Aorta (tissue), 5 donors: ENCODE measurements at regions of chr11 and their contacts with region 1.

Region 1: DNA sequence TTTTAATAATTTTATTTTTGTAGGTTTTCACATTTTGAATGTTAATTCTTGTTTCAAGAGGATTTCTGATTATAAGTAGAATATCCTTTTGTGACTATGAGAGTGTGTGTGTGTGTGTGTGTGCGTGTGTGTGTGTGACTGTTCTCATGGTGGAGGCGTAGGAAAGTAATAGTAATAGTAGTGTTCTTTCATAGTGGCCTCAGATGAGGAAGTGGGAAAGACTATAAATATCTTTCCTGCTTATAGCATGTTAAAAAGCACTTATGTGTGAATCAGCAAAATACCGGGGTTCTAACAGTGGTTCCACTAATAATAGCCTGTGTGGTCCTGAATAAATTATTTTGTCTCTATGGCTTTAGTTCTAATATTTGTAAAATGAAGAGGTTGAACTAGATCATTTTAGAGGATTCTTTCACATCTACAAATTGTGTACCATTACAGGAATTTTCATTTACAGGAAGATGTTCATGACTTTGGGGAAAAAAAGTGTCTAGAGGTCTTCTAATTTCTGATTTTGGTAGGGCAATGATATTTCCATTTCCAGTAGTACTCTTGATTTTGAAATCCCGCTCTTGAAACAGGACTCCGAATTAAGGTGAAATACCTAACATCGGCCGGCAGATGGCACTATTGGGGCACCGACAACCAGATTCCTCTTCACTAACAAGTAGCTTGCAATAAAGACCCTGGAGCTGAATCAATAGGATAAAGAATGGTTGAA is 29.9 kb upstream of the OR10G7 start:
- DNase-seq: peak; percentile 66 to 88
- ATAC-seq: peak; percentile 71
- H3K4me3 ChIP-seq: no peak overlapping the region
- H3K27ac ChIP-seq: no peak overlapping the region
- H3K4me1 ChIP-seq: no peaks in the 10 kb centered on the region
- H3K27me3 ChIP-seq: no peaks in the 10 kb centered on the region

Region 2: DNA sequence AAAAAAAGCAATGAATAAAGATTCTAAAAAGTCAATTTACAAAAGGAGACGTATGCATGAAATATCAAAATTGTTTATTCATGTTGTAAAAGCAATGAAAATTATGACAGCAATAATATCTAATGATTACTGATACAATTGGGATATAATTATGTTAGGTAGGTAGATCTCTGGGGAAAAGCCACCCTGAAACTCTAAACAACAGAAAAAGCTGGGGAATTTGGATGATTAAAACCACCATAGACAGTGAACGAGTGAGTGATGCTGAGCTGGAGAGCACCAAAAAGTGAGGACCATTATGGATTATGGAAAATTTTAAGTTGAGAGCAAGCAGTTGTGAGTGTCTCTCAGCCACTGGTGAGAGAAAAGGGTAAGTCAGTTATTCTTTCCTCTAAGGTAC is 44.6 kb before region 1 on chr11 and contains the start of gene OR10G8:
- intact Hi-C with region 1: no loop called
- DNase-seq: no peak
- ATAC-seq: no peak
- H3K4me3 ChIP-seq: no peak within 1 kb of the TSS
- H3K27ac ChIP-seq: no peak within 1 kb of the TSS
- H3K4me1 ChIP-seq: no peaks in the 10 kb centered on the region
- H3K27me3 ChIP-seq: no peaks in the 10 kb centered on the region
- total RNA-seq, gene OR10G8: not detected

Region 3: DNA sequence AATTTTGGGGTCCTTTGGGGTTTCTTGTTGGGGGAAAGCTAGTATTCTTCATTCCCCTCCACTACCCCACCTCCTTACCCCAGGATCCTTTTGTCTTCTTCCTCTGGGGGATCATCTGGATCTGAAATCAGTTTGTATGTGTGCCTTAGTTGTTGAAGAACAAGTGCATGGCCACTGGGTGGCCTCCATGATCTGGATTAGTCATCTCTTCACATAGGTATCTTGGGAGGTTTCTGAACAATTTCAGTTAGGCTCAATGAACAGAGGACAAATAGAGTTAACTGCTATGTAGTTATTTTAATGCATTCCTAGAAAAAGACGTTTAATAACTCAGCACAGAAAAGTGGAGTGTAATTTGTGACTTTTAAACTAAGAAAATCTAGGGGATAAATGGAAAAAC is 37.1 kb after region 1 on chr11:
- intact Hi-C with region 1: loop called in 1 of 2 experiments (anchors 5 kb)
- DNase-seq: peak in 1 of 2 donors; percentile 48
- ATAC-seq: no peak
- H3K4me3 ChIP-seq: no peak overlapping the region
- H3K27ac ChIP-seq: no peak overlapping the region
- H3K4me1 ChIP-seq: no peaks in the 10 kb centered on the region
- H3K27me3 ChIP-seq: no peaks in the 10 kb centered on the region

Region 4: GRCh38 chr11:124194698-124195410 is 123.8 kb after region 1 on chr11:
- intact Hi-C with region 1: loop called (anchors 2 kb)
- DNase-seq: peak in 1 of 2 donors; percentile 77
- ATAC-seq: peak; percentile 85
- H3K4me3 ChIP-seq: no peak overlapping the region
- H3K27ac ChIP-seq: peak overlapping the region; percentile 3 to 64
- H3K4me1 ChIP-seq: peaks cover 0 to 3% of the 10 kb centered on the region in 2 donors
- H3K27me3 ChIP-seq: no peaks in the 10 kb centered on the region

Region 5: DNA sequence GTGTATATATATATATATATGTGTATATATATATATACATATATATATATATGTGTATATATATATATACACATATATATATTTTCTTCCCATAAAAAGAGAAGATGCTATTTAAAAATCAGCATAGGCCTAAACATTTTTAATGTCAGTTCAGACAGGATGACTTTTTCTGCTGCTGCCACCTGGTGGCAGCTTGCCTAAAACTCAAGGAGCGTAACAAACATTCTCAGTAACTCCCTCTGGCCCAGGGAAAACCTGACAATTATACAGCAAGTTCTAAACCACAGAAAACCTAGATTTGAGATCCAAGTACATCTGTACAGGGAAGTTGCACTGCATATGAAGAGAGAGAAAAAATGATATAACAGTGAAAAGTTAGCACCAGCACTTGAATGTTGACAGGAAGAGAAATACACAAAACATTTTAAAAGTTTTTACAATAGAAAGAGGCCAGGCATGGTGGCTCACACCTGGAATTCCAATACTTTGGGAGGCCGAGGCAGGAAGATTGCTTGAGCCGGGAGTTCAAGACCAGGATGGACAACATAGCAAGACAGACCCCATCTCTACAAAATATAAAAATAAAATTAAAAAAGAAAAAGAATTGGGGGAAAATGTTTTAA is 515.3 kb after region 1 on chr11:
- intact Hi-C with region 1: loop called (anchors 5 to 10 kb)
- DNase-seq: peak; percentile 65 to 80
- ATAC-seq: no peak
- H3K4me3 ChIP-seq: no peak overlapping the region
- H3K27ac ChIP-seq: no peak overlapping the region
- H3K4me1 ChIP-seq: no peaks in the 10 kb centered on the region
- H3K27me3 ChIP-seq: no peaks in the 10 kb centered on the region